Head of caudate nucleus (tissue), 42 donors: ENCODE measurements at regions of chr14 and their contacts with region 1.

Region 1: DNA sequence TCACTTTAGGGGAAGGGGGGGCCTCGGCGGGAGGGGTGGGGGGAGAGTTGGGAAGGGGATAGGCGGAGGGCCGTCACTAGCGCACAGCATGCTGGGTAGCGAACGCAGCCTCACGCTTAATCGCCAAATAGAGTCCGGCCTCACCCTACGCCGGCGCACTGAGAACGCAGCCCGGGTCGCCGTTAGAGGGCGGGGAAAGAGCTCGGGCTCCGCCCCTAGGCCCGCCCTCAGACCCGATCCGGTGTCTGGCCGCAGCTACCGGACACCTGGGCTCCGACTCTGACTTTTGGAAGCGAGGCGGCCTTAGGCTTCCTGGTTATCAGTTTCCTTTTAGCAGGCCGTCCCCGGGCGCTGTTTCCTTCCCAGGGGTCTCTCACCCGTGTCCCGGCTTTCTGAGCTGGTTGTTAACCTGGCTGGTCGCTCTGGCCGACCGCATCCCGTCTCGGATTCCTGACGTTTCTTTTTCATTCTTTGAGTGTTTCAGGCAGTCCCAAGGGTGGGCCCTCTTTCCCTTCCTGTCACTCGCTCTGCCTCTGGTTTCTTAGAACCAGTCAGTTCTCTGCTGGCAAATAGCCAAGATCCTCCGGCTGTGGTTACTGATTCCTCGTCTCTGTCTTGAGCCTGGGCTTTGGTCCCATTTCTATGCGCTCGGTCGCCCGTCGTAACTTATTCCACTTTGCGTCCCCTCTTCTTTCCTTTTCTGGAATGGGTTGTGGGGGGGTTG is 378 bp upstream of the STRN3 start:
- DNase-seq: peak; percentile 96 to 99 (median 98)

Region 2: GRCh38 chr14:31080055-31080454 is 53.5 kb after region 1 on chr14:
- intact Hi-C with region 1: no loop called
- DNase-seq: no peak

Region 3: DNA sequence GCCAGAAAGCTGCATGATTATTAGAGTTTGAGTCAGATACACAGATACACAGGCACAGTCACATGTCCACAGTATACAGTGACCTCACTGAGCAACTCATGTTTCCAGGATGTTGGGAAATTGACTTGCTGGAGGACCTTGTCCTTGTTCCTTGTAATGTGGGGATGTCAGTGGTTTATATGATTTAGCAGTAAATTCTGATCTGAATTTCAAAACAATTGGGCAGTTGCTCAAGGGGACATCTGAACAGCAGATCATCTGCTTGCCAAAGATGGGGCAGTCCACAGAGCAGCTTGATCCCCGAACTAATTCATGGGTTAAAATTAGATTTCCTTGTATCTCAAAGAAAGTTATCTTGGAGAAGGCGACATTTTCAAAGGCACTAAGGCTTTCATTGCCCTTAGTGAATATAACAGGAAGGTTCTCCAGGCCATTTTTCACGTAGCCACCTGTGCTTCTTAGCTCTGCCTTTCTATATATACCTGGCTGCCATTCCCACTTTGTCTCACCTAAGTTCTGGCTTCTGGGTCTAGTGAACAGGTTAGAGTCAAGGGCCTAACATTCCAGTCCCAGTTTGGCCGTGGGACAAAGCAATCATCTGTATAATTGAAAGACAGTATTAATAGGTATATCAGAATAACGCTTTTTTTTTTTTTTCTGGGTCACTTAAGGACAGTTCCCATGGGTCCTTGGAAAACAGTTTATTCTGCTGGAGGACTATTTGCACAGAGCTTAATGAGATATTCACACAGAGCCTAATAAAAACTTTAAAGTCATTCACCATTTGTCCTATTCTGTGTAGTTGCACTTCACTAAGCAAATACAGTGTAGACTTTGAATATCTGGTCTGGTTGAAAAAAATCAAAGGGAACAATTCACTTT is 64.6 kb after region 1 on chr14:
- intact Hi-C with region 1: no loop called
- DNase-seq: no peak

Region 4: DNA sequence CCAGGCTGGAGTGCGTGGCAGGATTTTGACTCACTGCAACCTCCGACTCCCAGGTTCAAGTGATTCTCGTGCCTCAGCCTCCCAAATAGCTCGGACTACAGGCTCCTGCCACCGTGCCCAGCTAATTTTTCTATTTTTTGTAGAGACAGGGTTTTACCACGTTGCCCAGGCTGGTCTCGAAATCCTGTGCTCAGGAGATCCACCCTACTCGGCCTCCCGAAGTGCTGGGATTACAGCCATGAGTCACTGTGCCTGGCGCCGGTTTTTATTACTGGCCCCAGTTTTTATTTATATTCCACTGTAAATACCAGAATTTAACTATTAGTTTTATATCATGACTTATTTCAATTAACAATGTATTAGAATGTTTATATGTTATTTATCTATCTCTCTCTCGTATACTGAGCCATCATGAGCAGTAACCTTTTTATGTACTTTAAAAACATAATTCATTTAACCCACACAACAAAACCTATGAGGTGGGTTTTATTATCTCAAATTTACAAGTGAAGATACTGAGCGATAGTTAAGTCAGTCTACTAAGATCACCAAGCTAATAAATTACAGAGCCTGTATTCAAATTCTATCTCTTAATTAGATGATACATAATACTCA is 133.2 kb after region 1 on chr14:
- intact Hi-C with region 1: no loop called
- DNase-seq: no peak

Region 5: GRCh38 chr14:31207755-31208545 is 181.4 kb after region 1 on chr14 and contains the start of gene HECTD1:
- intact Hi-C with region 1: loop called (anchors 5 kb)
- DNase-seq: peak; percentile 51 to 95 (median 88)